H1 (cell line): ENCODE measurements at regions of chr2 and their contacts with region 1.

Region 1: DNA sequence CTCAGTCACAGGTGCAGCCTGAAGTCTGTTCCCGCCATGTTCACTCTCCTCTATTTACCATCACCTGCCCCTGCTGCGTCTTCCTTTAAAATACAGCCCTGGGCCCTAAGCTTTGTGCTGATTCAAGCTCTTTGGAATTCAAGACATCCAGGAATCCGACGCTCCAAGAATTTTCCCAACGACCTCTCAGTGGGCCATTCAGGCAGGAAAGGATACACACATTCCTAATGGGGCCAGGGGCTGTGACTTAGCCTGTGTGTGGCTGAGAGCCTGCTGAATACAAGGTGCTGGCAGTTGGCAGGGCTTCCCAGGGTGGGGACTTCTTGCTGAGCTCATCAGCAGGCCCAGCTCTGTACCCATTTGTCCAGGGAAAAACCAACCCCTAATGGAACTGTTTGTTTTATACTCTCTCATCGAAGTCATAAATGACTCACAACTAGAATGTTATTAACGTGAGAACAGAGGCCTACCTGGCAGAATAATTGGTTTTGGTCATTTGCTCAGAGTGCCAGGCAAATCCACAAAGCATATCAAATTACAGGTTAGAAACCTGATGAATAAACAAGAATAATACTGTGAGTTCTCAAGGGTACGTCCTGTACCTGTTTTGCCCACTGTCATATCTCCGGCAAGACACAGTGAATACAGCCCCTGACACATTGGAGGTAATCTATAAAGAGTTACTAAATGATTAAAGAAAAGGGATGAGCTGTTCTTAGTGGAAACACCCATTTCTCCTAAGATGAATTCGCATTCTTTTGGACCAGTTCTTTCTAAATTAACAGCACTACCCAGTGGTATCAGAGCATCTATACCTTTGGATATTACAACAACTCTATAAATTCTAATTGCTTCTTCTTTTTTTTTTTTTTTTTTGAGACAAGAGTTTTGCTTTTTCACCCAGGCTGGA is 12.6 kb upstream of the KCMF1 start:
- DNase-seq: peak; percentile 78 to 99
- H3K4me3 ChIP-seq: peak overlapping the region in 1 of 4 experiments; percentile 42; a peak in 2 of 8 replicates
- H3K27ac ChIP-seq: peak overlapping the region; percentile 92
- H3K4me1 ChIP-seq: peaks cover 11 to 37% (median 33%) of the 10 kb centered on the region in 4 experiments
- H3K27me3 ChIP-seq: no peaks in the 10 kb centered on the region
- CTCF ChIP-seq: no peak
- EP300 ChIP-seq: peak in 1 of 2 experiments; percentile 96; a peak in 2 of 3 replicates
- POLR2A ChIP-seq: peak; percentile 44 to 91
- RAD21 ChIP-seq: peak in 1 of 2 experiments; percentile 21; a peak in 3 of 4 replicates

Region 2: DNA sequence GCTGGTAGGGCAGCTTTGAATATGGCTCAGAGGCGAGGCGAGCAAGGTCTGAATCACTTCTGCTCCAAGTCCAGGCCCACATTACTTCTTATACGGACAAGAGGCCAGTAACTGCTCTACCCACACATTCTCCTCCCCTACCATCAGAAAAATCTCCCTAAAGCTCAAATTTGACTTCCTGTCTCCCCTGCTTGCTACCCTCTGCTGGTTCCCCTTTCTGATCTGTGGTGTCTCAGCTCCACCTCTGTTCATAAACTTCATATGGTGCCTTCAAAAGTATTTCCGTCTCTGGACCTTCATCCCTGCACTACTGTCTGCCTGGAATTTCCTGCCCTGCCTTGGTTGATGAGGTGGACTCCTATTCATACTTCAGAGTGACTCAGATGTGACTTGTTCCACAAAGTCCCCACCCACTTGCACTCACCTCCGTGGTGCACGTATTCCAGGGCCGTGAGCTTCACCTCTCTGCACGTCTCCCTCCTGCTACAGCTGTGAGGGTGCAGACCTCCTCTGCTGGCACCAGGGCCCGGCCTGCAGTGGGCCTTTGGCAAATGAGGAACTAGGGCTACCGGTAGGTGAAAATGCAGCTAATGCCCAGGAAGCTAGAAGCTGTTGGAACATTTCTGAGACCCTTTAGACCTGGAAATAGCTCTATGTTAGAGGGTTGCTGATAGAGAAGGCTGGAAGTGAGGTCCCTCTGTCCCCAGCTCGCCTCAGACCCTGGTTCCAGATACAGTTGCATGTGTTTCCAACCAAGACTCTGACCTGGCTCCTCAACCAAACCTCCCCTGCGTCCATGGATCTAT is 12.0 kb before region 1 on chr2:
- CTCF ChIA-PET with region 1: interaction called, 9 read pairs
- POLR2A ChIA-PET with region 1: interaction called, 231 read pairs
- DNase-seq: no peak
- H3K4me3 ChIP-seq: no peak overlapping the region
- H3K27ac ChIP-seq: no peak overlapping the region
- H3K4me1 ChIP-seq: peaks cover 6 to 8% (median 6%) of the 10 kb centered on the region in 4 experiments; a peak in 6 of 7 replicates
- H3K27me3 ChIP-seq: no peaks in the 10 kb centered on the region
- CTCF ChIP-seq: no peak
- EP300 ChIP-seq: no peak
- POLR2A ChIP-seq: no peak
- RAD21 ChIP-seq: no peak

Region 3: GRCh38 chr2:84970868-84971509 is 12.6 kb after region 1 on chr2 and contains the start of gene KCMF1:
- CTCF ChIA-PET with region 1: interaction called, 12 read pairs
- POLR2A ChIA-PET with region 1: interaction called, 288 read pairs
- DNase-seq: peak in 1 of 2 experiments; percentile 70
- H3K4me3 ChIP-seq: peak within 1 kb of the TSS; percentile 95 to 99 (median 96)
- H3K27ac ChIP-seq: peak within 1 kb of the TSS; percentile 95
- H3K4me1 ChIP-seq: peaks cover 0 to 9% (median 9%) of the 10 kb centered on the region in 4 experiments; a peak in 5 of 7 replicates
- H3K27me3 ChIP-seq: no peaks in the 10 kb centered on the region
- CTCF ChIP-seq: no peak
- EP300 ChIP-seq: no peak
- POLR2A ChIP-seq: peak in 1 of 2 experiments; percentile 32; a peak in 1 of 3 replicates
- RAD21 ChIP-seq: no peak
- total RNA-seq, gene KCMF1: 149 and 152 TPM in 2 replicates

Region 4: GRCh38 chr2:85017411-85018048 is 59.1 kb after region 1 on chr2:
- CTCF ChIA-PET with region 1: interaction called, 5 read pairs
- POLR2A ChIA-PET with region 1: interaction called, 14 read pairs
- DNase-seq: no peak
- H3K4me3 ChIP-seq: no peak overlapping the region
- H3K27ac ChIP-seq: no peak overlapping the region
- H3K4me1 ChIP-seq: peaks cover 0 to 2% (median 0%) of the 10 kb centered on the region in 4 experiments; a peak in 2 of 7 replicates
- H3K27me3 ChIP-seq: no peaks in the 10 kb centered on the region
- CTCF ChIP-seq: peak in 1 of 3 experiments; percentile 15; a peak in 2 of 4 replicates
- EP300 ChIP-seq: no peak
- POLR2A ChIP-seq: no peak
- RAD21 ChIP-seq: no peak